ENCODE measurements at regions of chr10 and their contacts with region 1.

Region 1: DNA sequence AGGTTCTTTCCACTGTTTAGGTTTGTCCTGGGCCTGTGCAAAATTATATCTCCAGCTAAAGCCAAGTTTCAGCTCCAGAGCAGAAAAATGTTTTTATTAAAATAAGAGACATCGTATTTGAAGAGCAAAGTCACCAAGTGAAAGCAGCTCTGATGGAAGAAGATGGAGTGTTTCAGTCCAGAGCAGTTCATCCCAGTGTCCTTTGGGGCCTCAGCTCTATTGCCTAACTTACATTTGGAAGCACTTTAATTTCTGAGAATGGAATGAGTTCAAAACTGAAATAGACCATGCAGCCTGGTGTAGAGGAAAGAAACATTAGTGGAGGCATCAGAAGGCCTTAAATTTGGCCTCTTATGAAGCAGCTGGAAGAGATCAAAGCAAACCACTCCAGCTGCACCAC is 545.2 kb downstream of the SORCS1 start:
- DNase-seq: no peak
- H3K4me3 ChIP-seq: no peak overlapping the region
- H3K4me3 Mint-ChIP-seq: no peak overlapping the region
- H3K27ac Mint-ChIP-seq: no peak overlapping the region
- H3K4me1 ChIP-seq: no peaks in the 10 kb centered on the region
- H3K4me1 Mint-ChIP-seq: no peaks in the 10 kb centered on the region
- H3K27me3 ChIP-seq: no peaks in the 10 kb centered on the region
- H3K27me3 Mint-ChIP-seq: peaks cover 5% of the 10 kb centered on the region
- CTCF ChIP-seq: no peak

Region 2: DNA sequence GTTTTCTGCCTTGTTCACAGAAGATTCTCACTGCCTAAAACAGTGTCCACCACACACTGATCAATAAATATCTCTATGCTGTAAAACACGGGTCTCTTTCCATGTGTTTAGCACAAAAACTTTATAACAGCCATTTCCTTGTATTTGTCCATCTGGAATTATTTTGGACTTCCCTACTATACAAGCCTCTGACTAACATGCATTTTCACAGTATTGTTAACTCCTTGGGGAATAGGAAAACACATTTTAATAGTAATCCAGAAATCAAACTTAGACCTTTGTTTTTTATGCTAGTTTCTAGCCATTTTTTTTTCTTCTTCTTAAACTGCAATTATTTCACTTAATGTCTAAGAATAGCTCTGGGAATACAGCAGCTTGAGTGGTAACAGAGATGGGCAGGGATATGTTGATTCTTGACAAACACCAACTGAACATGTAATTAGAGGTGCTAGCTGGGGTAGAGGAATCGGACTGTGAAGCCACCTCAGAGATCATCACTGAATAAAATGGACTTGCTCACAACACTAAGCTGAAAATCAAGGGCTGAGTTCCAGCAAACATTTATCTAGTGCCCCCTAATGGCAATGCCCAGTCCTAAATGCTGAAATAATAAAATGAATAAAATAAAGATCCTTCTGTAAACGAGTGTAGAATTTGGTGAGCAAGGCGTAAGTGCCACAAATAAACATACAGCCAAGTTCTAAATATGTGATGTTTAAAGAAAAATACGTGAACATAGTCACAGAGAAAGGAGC is 48.0 kb before region 1 on chr10:
- CTCF ChIA-PET with region 1: no interaction called
- POLR2A ChIA-PET with region 1: no interaction called
- intact Hi-C with region 1: no loop called
- DNase-seq: peak in 1 of 2 experiments; percentile 3
- H3K4me3 ChIP-seq: no peak overlapping the region
- H3K4me3 Mint-ChIP-seq: no peak overlapping the region
- H3K27ac Mint-ChIP-seq: no peak overlapping the region
- H3K4me1 ChIP-seq: no peaks in the 10 kb centered on the region
- H3K4me1 Mint-ChIP-seq: no peaks in the 10 kb centered on the region
- H3K27me3 ChIP-seq: no peaks in the 10 kb centered on the region
- H3K27me3 Mint-ChIP-seq: peaks cover 3% of the 10 kb centered on the region
- CTCF ChIP-seq: peak in 1 of 2 experiments; percentile 18

Region 3: GRCh38 chr10:106606554-106606910 is 12.8 kb before region 1 on chr10:
- CTCF ChIA-PET with region 1: no interaction called
- POLR2A ChIA-PET with region 1: no interaction called
- intact Hi-C with region 1: no loop called
- DNase-seq: no peak
- H3K4me3 ChIP-seq: no peak overlapping the region
- H3K4me3 Mint-ChIP-seq: no peak overlapping the region
- H3K27ac Mint-ChIP-seq: no peak overlapping the region
- H3K4me1 ChIP-seq: no peaks in the 10 kb centered on the region
- H3K4me1 Mint-ChIP-seq: no peaks in the 10 kb centered on the region
- H3K27me3 ChIP-seq: no peaks in the 10 kb centered on the region
- H3K27me3 Mint-ChIP-seq: no peaks in the 10 kb centered on the region
- CTCF ChIP-seq: no peak

Region 4: DNA sequence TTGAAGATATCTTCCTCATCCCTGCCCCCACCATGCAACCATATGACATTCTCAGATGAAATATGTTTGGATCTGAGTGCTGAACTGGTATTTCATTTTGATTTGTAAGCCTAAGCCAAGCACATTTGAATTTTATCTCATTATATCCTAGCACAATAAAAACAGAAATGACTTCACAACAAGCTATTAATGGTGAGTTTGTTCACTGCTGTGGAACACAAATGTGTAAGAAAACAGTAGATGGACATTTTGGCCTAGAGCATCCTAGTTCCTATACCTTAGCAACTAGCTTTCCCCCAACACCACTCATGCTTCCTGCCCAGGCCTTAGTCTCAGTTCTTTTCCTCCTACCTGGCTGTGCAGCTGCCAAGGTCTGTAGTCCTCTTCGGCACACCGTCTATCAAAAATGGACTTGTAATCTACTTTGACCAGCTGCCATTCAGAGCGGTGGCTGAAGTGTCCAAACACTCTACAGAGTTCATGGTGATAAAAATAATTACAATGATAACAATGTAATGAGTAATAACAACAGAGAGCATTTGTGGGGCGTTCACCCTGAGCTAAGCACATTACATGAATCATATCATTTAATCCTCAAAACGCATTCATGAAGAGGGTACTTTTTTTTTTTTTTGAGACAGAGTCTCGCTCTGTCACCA is 53.3 kb after region 1 on chr10:
- CTCF ChIA-PET with region 1: no interaction called
- POLR2A ChIA-PET with region 1: no interaction called
- intact Hi-C with region 1: loop called (anchors 1 kb)
- DNase-seq: no peak
- H3K4me3 ChIP-seq: no peak overlapping the region
- H3K4me3 Mint-ChIP-seq: no peak overlapping the region
- H3K27ac Mint-ChIP-seq: no peak overlapping the region
- H3K4me1 ChIP-seq: no peaks in the 10 kb centered on the region
- H3K4me1 Mint-ChIP-seq: no peaks in the 10 kb centered on the region
- H3K27me3 ChIP-seq: no peaks in the 10 kb centered on the region
- H3K27me3 Mint-ChIP-seq: peaks cover 2% of the 10 kb centered on the region
- CTCF ChIP-seq: no peak

Measured in Caco-2 (cell line).